AG04450 (cell line): ENCODE measurements at regions of chr15 and their contacts with region 1.

Region 1: DNA sequence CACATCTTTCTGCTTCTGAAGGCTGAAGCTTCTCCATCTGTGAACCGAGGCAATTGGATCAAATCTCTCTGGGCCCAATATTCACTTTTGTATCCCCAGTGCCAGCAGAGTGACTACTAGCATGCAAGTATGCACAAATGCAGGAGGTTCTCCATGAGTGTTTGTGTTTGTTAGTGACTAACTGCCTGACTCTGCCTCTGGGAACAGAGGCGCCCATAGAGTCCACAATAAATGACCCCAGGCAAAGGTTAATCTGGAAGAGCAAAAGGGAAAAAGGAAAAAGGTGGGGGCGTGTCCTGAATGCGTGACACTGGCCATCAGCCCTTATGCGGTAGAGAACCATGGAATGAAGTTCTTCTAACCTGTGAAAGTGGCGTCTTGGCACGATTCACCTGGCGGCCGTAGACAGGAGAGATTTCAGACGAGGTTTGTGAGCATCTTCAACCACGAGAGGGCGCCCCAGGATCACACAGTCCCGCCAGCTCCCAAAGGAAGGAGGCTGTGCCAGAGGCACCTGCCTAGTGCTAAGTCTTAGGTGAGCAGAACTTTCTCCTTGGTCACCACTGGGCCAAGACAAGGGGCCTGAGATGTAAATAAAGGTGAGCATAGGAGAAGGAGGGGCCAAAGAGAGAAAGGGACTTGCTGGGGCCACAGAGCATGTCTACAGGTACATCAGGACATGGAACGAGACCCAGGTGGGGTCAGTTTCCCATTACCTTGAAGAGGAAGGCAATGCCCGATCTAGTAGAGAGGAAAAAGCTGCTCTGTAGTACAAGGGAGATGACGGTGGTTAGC is 44.2 kb downstream of the RBPMS2 start:
- DNase-seq: no peak
- H3K4me3 ChIP-seq: no peak overlapping the region
- H3K27ac ChIP-seq: no peak overlapping the region
- H3K27me3 ChIP-seq: no peaks in the 10 kb centered on the region
- CTCF ChIP-seq: peak; percentile 91

Region 2: GRCh38 chr15:64430000-64430735 is 301.0 kb before region 1 on chr15:
- CTCF ChIA-PET with region 1: interaction called, 13 read pairs
- POLR2A ChIA-PET with region 1: no interaction called
- DNase-seq: peak; percentile 91
- H3K4me3 ChIP-seq: no peak overlapping the region
- H3K27ac ChIP-seq: peak overlapping the region; percentile 57
- H3K27me3 ChIP-seq: no peaks in the 10 kb centered on the region
- CTCF ChIP-seq: no peak

Region 3: GRCh38 chr15:64695561-64695992 is 35.6 kb before region 1 on chr15:
- CTCF ChIA-PET with region 1: interaction called, 201 read pairs
- POLR2A ChIA-PET with region 1: no interaction called
- DNase-seq: no peak
- H3K4me3 ChIP-seq: no peak overlapping the region
- H3K27ac ChIP-seq: no peak overlapping the region
- H3K27me3 ChIP-seq: no peaks in the 10 kb centered on the region
- CTCF ChIP-seq: no peak

Region 4: DNA sequence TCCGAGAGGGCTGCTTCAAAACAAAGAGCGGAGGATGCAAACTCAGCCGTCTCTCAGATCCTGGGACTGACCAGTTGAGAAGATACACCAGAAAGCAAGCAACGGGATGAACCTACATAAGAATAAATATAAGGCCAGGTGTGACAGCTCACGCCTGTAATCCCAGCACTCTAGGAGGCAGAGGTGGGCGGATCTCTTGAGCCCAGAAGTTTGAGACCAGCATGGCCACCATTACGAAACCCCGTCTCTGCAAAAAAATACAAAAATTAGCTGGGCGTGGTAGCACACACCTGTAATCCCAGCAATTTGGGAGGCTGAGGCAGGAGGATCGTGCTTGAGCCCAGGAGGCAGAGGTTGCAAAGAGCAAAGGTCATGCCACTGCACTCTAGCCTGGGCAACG is 12.5 kb after region 1 on chr15:
- CTCF ChIA-PET with region 1: interaction called, 6 read pairs
- POLR2A ChIA-PET with region 1: interaction called, 12 read pairs
- DNase-seq: no peak
- H3K4me3 ChIP-seq: no peak overlapping the region
- H3K27ac ChIP-seq: no peak overlapping the region
- H3K27me3 ChIP-seq: peaks cover 2% of the 10 kb centered on the region
- CTCF ChIP-seq: no peak

Region 5: DNA sequence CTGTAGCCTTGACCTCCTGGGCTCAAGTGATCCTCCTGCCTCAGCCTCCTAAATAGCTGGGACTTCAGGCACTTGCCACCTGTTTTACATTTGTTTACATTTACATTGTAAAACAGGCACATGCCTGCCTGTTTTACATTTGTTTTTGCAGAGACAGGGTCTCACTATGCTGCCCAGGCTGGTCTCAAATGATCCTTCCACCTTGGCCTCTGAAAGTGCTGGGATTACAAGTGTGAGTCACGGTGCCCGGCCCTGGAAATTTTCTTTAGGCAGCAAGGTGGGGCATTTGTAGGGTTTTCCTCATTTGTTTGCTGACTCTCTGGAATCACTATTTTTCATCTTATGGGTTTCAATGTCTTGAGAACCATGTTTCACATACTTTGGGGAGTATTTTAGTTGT is 69.3 kb after region 1 on chr15:
- CTCF ChIA-PET with region 1: interaction called, 11 read pairs
- POLR2A ChIA-PET with region 1: no interaction called
- DNase-seq: no peak
- H3K4me3 ChIP-seq: no peak overlapping the region
- H3K27ac ChIP-seq: no peak overlapping the region
- H3K27me3 ChIP-seq: no peaks in the 10 kb centered on the region
- CTCF ChIP-seq: no peak

Region 6: DNA sequence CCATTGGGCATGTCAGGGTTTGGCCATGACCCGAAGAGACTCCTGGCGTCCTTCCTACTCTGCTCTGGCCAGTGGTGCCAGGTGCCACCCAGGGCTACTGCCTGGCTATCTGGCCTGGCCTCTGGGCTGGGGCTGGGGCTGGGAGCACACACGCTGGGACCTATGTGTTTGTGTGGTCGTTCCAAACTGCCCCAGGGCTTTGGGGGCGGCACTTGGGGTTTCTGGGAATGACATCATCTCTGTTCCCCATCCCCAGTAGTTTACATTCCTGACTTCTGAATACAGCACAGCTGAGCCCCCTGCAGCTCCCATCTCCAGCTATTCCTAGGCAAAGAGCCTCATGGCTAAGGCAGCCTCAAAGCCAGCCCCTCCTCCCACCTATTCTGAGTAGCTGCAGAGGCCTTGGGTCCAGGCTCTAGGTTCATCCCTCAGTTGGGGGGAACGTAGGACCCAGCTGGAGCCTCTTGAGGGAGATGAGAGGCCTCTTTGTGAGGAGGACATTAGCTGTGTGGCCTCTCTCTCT is 134.8 kb after region 1 on chr15:
- CTCF ChIA-PET with region 1: no interaction called
- POLR2A ChIA-PET with region 1: no interaction called
- DNase-seq: peak; percentile 93
- H3K4me3 ChIP-seq: no peak overlapping the region
- H3K27ac ChIP-seq: peak overlapping the region; percentile 91
- H3K27me3 ChIP-seq: no peaks in the 10 kb centered on the region
- CTCF ChIP-seq: no peak